Activated naive CD4-positive, alpha-beta T cell treated with anti-CD3 and anti-CD28 coated beads for 36 hours (primary cell): ENCODE measurements at regions of chr6 and their contacts with region 1.

Region 1: GRCh38 chr6:118709859-118710350 is 58.5 kb upstream of the CEP85L start:
- DNase-seq: peak; percentile 88
- H3K4me3 Mint-ChIP-seq: peak overlapping the region; percentile 82
- H3K27ac Mint-ChIP-seq: peak overlapping the region; percentile 98
- H3K4me1 Mint-ChIP-seq: peaks cover 70% of the 10 kb centered on the region
- H3K27me3 Mint-ChIP-seq: no peaks in the 10 kb centered on the region

Region 2: DNA sequence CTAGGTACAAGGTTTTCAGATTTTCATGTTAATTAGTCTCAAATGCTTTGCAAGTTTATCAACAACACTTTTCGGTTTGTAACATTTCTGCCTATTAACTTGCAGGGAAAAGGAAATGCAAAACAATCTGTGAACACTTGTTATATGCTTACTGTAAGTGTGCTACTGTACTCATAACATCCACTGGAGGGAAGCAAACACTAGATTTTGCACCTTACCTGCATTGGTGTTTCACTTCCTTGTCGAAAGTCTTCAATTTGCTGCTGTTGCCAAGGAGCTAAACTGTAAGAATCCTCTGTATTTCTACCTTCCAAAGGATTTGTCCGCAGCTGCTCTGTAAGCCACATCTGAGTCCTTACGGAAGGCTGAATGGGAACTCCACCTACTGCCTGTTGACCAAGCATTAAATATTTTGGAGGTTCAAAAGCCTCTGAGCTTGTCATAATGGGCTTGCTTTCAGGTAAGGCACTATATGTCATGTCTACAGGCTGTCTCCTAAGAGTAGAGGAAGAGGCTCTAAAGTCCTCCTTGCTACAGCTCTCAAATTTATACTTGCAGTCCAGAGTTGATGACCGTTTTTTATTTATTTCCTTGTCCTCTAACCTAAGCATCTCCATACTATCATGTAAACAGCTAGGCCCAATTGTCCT is 144.5 kb before region 1 on chr6:
- CTCF ChIA-PET with region 1: interaction called, 6 read pairs
- intact Hi-C with region 1: loop called (anchors 1 kb)
- DNase-seq: peak; percentile 26
- H3K4me3 Mint-ChIP-seq: no peak overlapping the region
- H3K27ac Mint-ChIP-seq: peak overlapping the region; percentile 12
- H3K4me1 Mint-ChIP-seq: peaks cover 28% of the 10 kb centered on the region
- H3K27me3 Mint-ChIP-seq: no peaks in the 10 kb centered on the region

Region 3: DNA sequence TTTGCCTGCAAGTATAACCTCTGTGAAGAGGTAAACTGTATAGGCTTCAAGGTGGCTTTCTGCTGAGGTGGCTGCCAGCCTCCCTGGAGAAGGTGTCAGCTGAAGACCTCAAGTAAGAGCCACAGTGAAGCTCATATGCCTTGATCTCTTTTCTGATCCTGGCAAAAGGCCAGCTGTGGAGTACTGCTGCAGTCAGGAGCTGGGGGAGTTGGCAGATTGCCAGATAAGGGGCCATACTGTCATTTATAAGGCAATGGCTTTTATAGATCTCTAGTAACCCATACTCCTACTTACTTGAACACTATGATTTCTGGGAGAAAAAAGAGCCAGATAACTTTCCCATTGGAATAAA is 49.7 kb before region 1 on chr6:
- CTCF ChIA-PET with region 1: interaction called, 5 read pairs
- intact Hi-C with region 1: loop called (anchors 1 kb)
- DNase-seq: peak; percentile 65
- H3K4me3 Mint-ChIP-seq: peak overlapping the region; percentile 44
- H3K27ac Mint-ChIP-seq: peak overlapping the region; percentile 84
- H3K4me1 Mint-ChIP-seq: peaks cover 69% of the 10 kb centered on the region
- H3K27me3 Mint-ChIP-seq: no peaks in the 10 kb centered on the region

Region 4: GRCh38 chr6:118697554-118697953 is 12.4 kb before region 1 on chr6:
- CTCF ChIA-PET with region 1: interaction called, 9 read pairs
- intact Hi-C with region 1: loop called (anchors 1 kb)
- DNase-seq: peak; percentile 41
- H3K4me3 Mint-ChIP-seq: no peak overlapping the region
- H3K27ac Mint-ChIP-seq: no peak overlapping the region
- H3K4me1 Mint-ChIP-seq: peaks cover 73% of the 10 kb centered on the region
- H3K27me3 Mint-ChIP-seq: no peaks in the 10 kb centered on the region

Region 5: DNA sequence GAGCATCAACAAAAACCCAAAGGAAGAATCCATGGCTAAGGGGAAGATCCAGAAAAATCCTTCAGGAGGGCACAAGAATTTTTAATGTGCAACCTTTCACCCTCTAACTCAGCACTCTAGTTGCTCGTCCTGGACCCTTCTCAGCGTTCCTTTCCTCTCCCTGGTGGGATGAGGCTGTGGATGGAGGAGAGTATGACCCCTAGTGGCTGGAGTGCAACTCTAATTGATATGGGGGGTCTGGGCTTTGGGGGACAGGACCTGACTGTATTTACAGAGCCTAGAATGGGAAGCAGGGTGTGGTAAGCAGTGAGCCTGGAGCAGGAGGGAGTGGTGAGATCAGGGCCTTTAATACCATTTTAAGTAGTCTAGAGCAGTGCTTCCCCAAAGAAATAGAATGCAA is 25.4 kb after region 1 on chr6:
- CTCF ChIA-PET with region 1: interaction called, 3 read pairs
- intact Hi-C with region 1: loop called (anchors 1 kb)
- DNase-seq: no peak
- H3K4me3 Mint-ChIP-seq: no peak overlapping the region
- H3K27ac Mint-ChIP-seq: no peak overlapping the region
- H3K4me1 Mint-ChIP-seq: peaks cover 33% of the 10 kb centered on the region
- H3K27me3 Mint-ChIP-seq: no peaks in the 10 kb centered on the region

Region 6: GRCh38 chr6:118776607-118777549 is 67.0 kb after region 1 on chr6:
- CTCF ChIA-PET with region 1: interaction called, 5 read pairs
- intact Hi-C with region 1: loop called (anchors 1 kb)
- DNase-seq: peak; percentile 85
- H3K4me3 Mint-ChIP-seq: no peak overlapping the region
- H3K27ac Mint-ChIP-seq: peak overlapping the region; percentile 47
- H3K4me1 Mint-ChIP-seq: peaks cover 23% of the 10 kb centered on the region
- H3K27me3 Mint-ChIP-seq: no peaks in the 10 kb centered on the region

Region 7: DNA sequence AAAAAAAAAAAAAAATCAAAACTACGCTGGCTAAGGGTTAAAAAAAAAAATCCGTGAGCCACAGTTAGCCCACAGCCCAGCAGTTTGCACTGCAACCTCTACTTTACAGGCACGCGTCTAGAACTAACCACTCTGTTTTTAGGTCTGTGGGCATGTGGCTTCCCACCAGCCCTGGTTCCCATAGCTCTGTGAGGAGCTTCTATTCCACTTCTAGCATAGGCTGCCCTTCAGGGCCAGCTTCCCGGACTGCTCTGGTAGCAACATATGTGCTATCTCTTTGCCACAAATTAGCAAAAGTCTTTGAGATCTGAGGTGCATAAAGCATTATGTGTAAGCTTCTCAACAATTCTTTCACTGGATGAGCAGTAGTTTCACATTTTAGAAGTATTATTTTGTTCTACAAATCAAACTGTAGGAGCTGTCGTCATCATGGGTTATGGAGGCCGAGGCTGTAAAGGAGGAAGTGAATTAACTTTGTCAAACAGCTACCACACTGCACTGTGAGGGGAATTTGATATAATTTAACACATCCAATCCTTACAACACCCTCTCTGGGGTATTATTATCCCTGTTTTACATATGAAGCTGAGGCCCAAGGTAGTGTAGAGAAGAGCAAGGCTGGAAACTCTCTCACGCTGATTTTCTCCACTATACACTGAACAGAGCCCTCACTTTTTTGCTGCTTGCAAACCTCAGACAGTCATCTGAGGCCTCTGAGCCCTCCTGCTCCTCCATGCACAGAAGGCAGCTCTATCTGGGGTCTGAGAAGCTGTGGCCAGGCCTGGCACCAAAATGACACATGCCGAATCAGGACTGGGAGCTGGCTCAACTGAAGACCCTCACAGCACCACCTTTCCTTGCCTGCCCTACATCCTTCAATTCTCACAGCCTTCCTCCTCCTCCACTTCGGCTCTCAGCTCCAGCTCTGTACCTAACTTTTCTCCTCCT is 604.3 kb after region 1 on chr6:
- CTCF ChIA-PET with region 1: no interaction called
- intact Hi-C with region 1: loop called (anchors 5 kb)
- DNase-seq: peak; percentile 65
- H3K4me3 Mint-ChIP-seq: peak overlapping the region; percentile 41
- H3K27ac Mint-ChIP-seq: peak overlapping the region; percentile 92
- H3K4me1 Mint-ChIP-seq: peaks cover 58% of the 10 kb centered on the region
- H3K27me3 Mint-ChIP-seq: no peaks in the 10 kb centered on the region

Region 8: GRCh38 chr6:119683015-119683414 is 973.1 kb after region 1 on chr6:
- CTCF ChIA-PET with region 1: no interaction called
- intact Hi-C with region 1: no loop called
- DNase-seq: no peak
- H3K4me3 Mint-ChIP-seq: no peak overlapping the region
- H3K27ac Mint-ChIP-seq: no peak overlapping the region
- H3K4me1 Mint-ChIP-seq: no peaks in the 10 kb centered on the region
- H3K27me3 Mint-ChIP-seq: no peaks in the 10 kb centered on the region